ENCODE measurements at regions of chr10 and their contacts with region 1.

Region 1: GRCh38 chr10:95832216-95833041 is 75.3 kb upstream of the CC2D2B start:
- DNase-seq: peak; percentile 78
- H3K4me3 Mint-ChIP-seq: peak overlapping the region; percentile 76
- H3K27ac Mint-ChIP-seq: peak overlapping the region; percentile 99
- H3K4me1 Mint-ChIP-seq: peaks cover 75% of the 10 kb centered on the region
- H3K27me3 Mint-ChIP-seq: no peaks in the 10 kb centered on the region

Region 2: GRCh38 chr10:95755511-95756004 is 76.9 kb before region 1 on chr10:
- CTCF ChIA-PET with region 1: interaction called, 7 read pairs
- POLR2A ChIA-PET with region 1: interaction called, 80 read pairs
- DNase-seq: no peak
- H3K4me3 Mint-ChIP-seq: peak overlapping the region; percentile 76
- H3K27ac Mint-ChIP-seq: peak overlapping the region; percentile 54
- H3K4me1 Mint-ChIP-seq: peaks cover 42% of the 10 kb centered on the region
- H3K27me3 Mint-ChIP-seq: peaks cover 14% of the 10 kb centered on the region

Region 3: GRCh38 chr10:95783741-95784140 is 48.7 kb before region 1 on chr10:
- CTCF ChIA-PET with region 1: interaction called, 3 read pairs
- POLR2A ChIA-PET with region 1: interaction called, 11 read pairs
- DNase-seq: no peak
- H3K4me3 Mint-ChIP-seq: no peak overlapping the region
- H3K27ac Mint-ChIP-seq: no peak overlapping the region
- H3K4me1 Mint-ChIP-seq: peaks cover 60% of the 10 kb centered on the region
- H3K27me3 Mint-ChIP-seq: peaks cover 13% of the 10 kb centered on the region

Region 4: GRCh38 chr10:95820363-95820762 is 12.1 kb before region 1 on chr10:
- CTCF ChIA-PET with region 1: no interaction called
- POLR2A ChIA-PET with region 1: interaction called, 26 read pairs
- DNase-seq: no peak
- H3K4me3 Mint-ChIP-seq: no peak overlapping the region
- H3K27ac Mint-ChIP-seq: no peak overlapping the region
- H3K4me1 Mint-ChIP-seq: peaks cover 32% of the 10 kb centered on the region
- H3K27me3 Mint-ChIP-seq: peaks cover 7% of the 10 kb centered on the region

Region 5: DNA sequence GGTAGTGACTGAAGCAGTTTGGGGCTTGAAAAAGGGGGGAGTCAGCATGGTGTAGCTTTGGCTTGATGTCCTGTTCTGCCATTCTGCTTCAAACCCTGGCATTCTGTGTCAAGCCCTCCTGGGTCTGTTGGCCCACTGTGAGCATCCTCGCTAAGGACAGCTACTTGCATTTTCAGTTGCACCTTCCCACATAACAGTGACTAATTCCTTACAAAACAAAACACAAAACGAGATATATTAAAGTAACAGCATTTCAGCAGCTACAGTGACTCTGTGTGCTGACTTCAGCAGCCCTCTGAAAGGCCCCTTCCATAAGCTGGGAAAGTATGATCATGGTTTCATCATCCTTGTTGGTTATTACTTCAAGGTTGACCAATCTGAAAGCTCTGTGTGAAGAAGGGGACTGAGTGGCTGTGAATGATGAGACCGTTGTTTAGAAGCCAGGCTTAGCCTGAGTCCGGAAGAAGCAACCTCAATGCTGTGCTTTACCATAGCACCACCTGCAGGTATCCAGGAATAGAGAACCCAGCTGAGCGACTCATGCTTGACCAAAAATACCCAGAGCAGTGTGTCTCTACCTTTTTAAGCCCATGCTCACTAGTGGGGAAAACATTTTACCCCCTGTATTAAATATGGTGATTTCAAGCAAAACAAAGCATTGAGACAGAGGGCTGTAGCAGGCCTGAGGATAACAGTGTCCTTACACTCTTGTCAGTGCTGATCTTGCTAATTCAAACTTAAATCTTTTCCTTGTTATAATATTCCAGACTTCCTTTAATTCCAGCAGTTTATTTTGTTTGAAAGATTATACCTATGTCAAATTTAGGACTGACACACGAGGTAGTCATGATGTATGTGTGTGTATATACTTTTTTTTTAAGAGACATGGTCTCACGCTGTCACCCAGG is 32.7 kb after region 1 on chr10:
- CTCF ChIA-PET with region 1: interaction called, 12 read pairs
- POLR2A ChIA-PET with region 1: interaction called, 19 read pairs
- DNase-seq: peak; percentile 62
- H3K4me3 Mint-ChIP-seq: no peak overlapping the region
- H3K27ac Mint-ChIP-seq: peak overlapping the region; percentile 69
- H3K4me1 Mint-ChIP-seq: peaks cover 55% of the 10 kb centered on the region
- H3K27me3 Mint-ChIP-seq: no peaks in the 10 kb centered on the region